Activated B cell treated with CpG ODN at 0.5 μM for 24 hours (primary cell): ENCODE measurements at regions of chr1 and their contacts with region 1.

Region 1: DNA sequence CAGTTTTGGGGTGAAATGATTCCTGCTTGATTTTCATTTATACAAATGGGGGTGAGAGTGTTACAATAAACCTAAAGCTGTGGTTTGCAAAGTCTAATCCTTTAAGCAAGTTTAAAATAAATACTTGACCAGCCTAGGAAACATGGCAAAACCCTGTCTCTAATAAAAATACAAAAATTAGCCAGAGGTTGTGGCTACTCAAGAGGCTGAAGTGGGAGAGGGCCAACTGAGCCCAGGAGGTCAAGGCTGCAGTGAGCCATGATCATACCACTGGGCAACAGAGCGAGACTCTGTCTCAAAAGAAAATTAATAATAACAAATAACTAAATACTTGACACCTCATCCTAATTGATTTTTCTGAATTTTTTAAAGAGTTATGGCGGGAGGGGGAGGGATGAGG is 110.8 kb downstream of the EIF4G3 start:
- DNase-seq: no peak
- ATAC-seq: no peak
- H3K4me3 Mint-ChIP-seq: no peak overlapping the region
- H3K27ac Mint-ChIP-seq: no peak overlapping the region
- H3K4me1 Mint-ChIP-seq: peaks cover 4% of the 10 kb centered on the region
- H3K27me3 Mint-ChIP-seq: no peaks in the 10 kb centered on the region
- CTCF ChIP-seq: no peak

Region 2: DNA sequence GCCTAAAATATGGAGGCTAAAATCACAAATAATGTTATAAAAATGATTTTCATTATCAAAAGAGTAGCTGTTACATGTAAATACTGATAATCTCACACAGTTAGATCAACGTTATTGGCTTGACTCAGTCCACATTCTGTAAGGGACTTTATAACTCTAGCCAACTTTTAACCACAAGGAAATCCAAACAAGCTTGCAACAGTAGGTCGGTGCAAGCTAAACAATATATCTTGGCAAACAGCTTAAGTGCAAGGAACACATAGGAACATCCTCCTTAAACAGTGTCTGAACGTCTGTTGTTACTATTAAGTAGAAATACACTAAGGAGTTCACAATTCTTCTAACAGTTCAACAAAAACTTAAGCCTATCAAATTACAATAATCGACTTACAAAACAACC is 15.8 kb before region 1 on chr1:
- CTCF ChIA-PET with region 1: no interaction called
- POLR2A ChIA-PET with region 1: no interaction called
- intact Hi-C with region 1: loop called (anchors 2 kb)
- DNase-seq: no peak
- ATAC-seq: no peak
- H3K4me3 Mint-ChIP-seq: no peak overlapping the region
- H3K27ac Mint-ChIP-seq: no peak overlapping the region
- H3K4me1 Mint-ChIP-seq: peaks cover 17% of the 10 kb centered on the region
- H3K27me3 Mint-ChIP-seq: no peaks in the 10 kb centered on the region
- CTCF ChIP-seq: no peak